ENCODE measurements at regions of chr12 and their contacts with region 1.

Region 1: GRCh38 chr12:57111031-57111734 is at the start of gene STAT6:
- DNase-seq: peak; percentile 81
- H3K4me3 Mint-ChIP-seq: peak within 1 kb of the TSS; percentile 77
- H3K27ac Mint-ChIP-seq: peak within 1 kb of the TSS; percentile 84
- H3K4me1 Mint-ChIP-seq: peaks cover 37% of the 10 kb centered on the region
- H3K27me3 Mint-ChIP-seq: peaks cover 6% of the 10 kb centered on the region
- CTCF ChIP-seq: no peak
- total RNA-seq, gene STAT6: 213 and 243 TPM in 2 replicates

Region 2: DNA sequence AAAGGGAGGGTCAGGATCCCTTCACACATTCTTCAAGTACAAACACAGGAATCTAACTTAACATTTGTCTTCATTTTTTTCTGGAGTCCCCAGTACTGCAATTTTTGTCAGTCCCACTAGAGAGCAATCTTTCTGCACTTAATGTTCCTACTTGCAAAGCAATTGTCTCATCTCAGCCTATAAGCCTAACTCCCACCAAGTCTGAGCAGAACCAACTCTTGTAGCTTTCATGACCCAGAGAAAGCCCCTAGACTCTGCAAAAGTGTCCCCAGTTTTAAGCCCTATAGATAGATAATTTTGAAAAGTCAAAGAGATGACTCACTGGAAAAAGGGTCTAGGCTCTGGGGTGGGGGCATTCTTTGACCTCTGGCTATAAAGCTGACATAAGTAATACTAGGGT is 103.0 kb before region 1 on chr12:
- CTCF ChIA-PET with region 1: interaction called, 7 read pairs
- intact Hi-C with region 1: loop called (anchors 1 kb)
- DNase-seq: peak; percentile 32
- H3K4me3 Mint-ChIP-seq: no peak overlapping the region
- H3K27ac Mint-ChIP-seq: no peak overlapping the region
- H3K4me1 Mint-ChIP-seq: peaks cover 14% of the 10 kb centered on the region
- H3K27me3 Mint-ChIP-seq: peaks cover 38% of the 10 kb centered on the region
- CTCF ChIP-seq: no peak

Region 3: GRCh38 chr12:57069523-57069922 is 41.7 kb before region 1 on chr12:
- CTCF ChIA-PET with region 1: interaction called, 148 read pairs
- intact Hi-C with region 1: loop called (anchors 1 kb)
- DNase-seq: peak; percentile 68
- H3K4me3 Mint-ChIP-seq: no peak overlapping the region
- H3K27ac Mint-ChIP-seq: no peak overlapping the region
- H3K4me1 Mint-ChIP-seq: no peaks in the 10 kb centered on the region
- H3K27me3 Mint-ChIP-seq: no peaks in the 10 kb centered on the region
- CTCF ChIP-seq: peak; percentile 64

Region 4: DNA sequence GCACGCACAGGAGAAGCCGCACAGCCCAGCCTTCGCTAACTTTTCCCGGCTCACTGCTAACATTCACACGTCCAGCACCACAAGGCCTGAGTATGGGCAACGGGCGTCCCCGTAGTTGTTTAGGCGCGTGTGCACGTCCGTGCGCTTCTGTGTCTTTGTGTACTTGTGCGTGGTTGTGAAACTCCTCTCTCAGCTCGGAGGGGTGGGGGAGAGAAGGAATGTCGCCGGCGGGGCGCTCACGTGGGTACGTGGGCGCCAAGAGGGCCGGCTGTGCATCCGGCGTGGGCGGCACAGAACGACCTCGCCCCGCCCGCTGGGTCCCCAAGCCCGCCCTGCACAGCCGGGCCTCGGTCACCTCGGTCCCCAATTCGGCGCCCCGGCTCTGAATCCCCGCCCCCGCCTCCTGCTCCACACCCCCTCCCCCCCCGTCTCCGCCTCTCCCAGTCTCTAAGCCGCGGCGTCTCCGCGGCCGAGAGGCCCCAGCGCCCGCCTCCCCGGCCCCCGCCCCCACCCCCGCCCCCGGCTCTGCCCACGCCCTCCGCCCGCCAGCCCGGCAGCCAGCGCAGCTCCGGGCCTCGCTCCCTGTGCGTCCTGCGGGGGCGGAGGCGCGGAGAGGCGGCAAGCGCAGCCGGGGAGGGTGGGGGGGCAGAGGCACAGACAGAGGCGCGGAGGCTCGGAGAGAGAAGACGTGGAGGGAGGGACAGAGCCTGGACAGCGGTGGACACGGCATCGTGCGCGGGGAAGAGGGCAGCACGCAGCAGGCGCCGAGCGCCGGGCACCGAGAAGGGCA is 22.5 kb before region 1 on chr12 and contains the start of gene NAB2:
- CTCF ChIA-PET with region 1: interaction called, 49 read pairs
- intact Hi-C with region 1: loop called (anchors 2 kb)
- DNase-seq: peak; percentile 97
- H3K4me3 Mint-ChIP-seq: peak within 1 kb of the TSS; percentile 91
- H3K27ac Mint-ChIP-seq: peak within 1 kb of the TSS; percentile 94
- H3K4me1 Mint-ChIP-seq: peaks cover 61% of the 10 kb centered on the region
- H3K27me3 Mint-ChIP-seq: no peaks in the 10 kb centered on the region
- CTCF ChIP-seq: no peak
- total RNA-seq, gene NAB2: 21.3 and 25.6 TPM in 2 replicates

Region 5: GRCh38 chr12:57175428-57176138 is 64.4 kb after region 1 on chr12:
- CTCF ChIA-PET with region 1: interaction called, 13 read pairs
- intact Hi-C with region 1: no loop called
- DNase-seq: peak; percentile 88
- H3K4me3 Mint-ChIP-seq: no peak overlapping the region
- H3K27ac Mint-ChIP-seq: no peak overlapping the region
- H3K4me1 Mint-ChIP-seq: no peaks in the 10 kb centered on the region
- H3K27me3 Mint-ChIP-seq: peaks cover 13% of the 10 kb centered on the region
- CTCF ChIP-seq: peak; percentile 64

Measured in Calu3 (cell line).